ENCODE measurements at regions of chr2 and their contacts with region 1.

Region 1: DNA sequence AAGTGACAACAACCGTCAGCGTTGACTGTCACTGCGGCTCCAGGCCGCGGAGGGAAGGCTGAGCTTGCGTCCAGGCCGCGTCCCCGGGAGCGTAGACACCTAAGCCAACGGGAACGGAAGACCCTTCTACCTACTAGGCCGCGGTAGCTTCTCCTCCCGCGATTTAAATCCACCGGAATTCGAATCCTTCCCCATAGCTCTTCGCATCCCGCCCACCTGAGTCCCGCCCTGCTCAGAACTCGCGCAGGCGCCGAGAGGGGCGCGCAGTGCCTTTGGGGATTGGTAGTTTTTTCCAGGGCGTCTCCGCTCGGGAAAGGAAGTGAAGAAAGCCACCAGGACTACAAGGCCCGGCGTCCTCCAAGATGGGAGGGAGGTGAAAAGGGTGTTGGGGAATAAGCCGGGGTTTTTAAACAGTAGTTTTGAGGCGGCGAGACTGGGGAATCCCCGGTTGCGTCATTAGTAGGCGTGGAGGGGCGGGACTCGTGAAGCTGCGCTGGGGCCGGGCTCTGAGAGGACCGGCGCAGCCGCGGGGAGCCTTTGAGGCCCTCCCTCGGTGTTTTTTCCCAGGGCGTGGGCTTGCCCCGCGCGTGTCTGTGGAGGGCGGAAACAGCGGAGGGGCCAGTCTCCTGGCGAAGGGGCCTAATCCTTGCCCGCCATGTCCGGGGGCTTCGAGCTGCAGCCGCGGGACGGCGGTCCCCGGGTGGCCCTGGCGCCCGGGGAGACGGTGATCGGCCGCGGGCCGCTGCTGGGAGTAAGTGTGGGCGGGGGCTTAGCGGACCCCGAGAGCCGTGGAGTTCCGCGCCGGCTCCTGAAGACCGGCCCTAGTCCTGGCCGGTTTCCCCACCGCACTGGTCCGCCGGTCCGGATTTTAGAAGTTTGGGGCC is at the starts of genes APLF and FBXO48:
- DNase-seq: peak; percentile 98
- ATAC-seq: peak; percentile 98
- H3K4me3 ChIP-seq: peak within 1 kb of the TSS; percentile 82 to 85
- H3K27ac ChIP-seq: peak within 1 kb of the TSS; percentile 48; the same call in 1 of the 2 replicates
- H3K4me1 ChIP-seq: peaks cover 4 to 18% of the 10 kb centered on the region in 2 experiments; a peak in 3 of 4 replicates
- H3K27me3 ChIP-seq: no peaks in the 10 kb centered on the region
- CTCF ChIP-seq: no peak
- POLR2A ChIP-seq: peak; percentile 59
- RAD21 ChIP-seq: no peak
- total RNA-seq, gene APLF: 1.6 TPM
- total RNA-seq, gene FBXO48: 0.91 TPM

Region 2: GRCh38 chr2:68441179-68441993 is 25.9 kb before region 1 on chr2:
- CTCF ChIA-PET with region 1: interaction called, 10 read pairs
- POLR2A ChIA-PET with region 1: no interaction called
- RAD21 ChIA-PET with region 1: no interaction called
- intact Hi-C with region 1: no loop called
- DNase-seq: peak; percentile 82
- ATAC-seq: peak; percentile 98
- H3K4me3 ChIP-seq: no peak overlapping the region
- H3K27ac ChIP-seq: no peak overlapping the region
- H3K4me1 ChIP-seq: peaks cover 0 to 4% of the 10 kb centered on the region in 2 experiments; a peak in 1 of 4 replicates
- H3K27me3 ChIP-seq: no peaks in the 10 kb centered on the region
- CTCF ChIP-seq: peak; percentile 82 to 95 (median 84)
- POLR2A ChIP-seq: no peak
- RAD21 ChIP-seq: peak; percentile 83

Region 3: GRCh38 chr2:68709421-68709911 is 242.1 kb after region 1 on chr2:
- CTCF ChIA-PET with region 1: interaction called, 32 read pairs
- POLR2A ChIA-PET with region 1: no interaction called
- RAD21 ChIA-PET with region 1: no interaction called
- intact Hi-C with region 1: loop called (anchors 2 kb)
- DNase-seq: peak; percentile 45
- ATAC-seq: peak; percentile 98
- H3K4me3 ChIP-seq: no peak overlapping the region
- H3K27ac ChIP-seq: no peak overlapping the region
- H3K4me1 ChIP-seq: no peaks in the 10 kb centered on the region
- H3K27me3 ChIP-seq: no peaks in the 10 kb centered on the region
- CTCF ChIP-seq: peak; percentile 63 to 78 (median 77)
- POLR2A ChIP-seq: no peak
- RAD21 ChIP-seq: peak; percentile 77

Region 4: GRCh38 chr2:68751397-68752339 is 284.3 kb after region 1 on chr2:
- CTCF ChIA-PET with region 1: interaction called, 13 read pairs
- POLR2A ChIA-PET with region 1: no interaction called
- RAD21 ChIA-PET with region 1: no interaction called
- intact Hi-C with region 1: no loop called
- DNase-seq: peak; percentile 86
- ATAC-seq: peak; percentile 99
- H3K4me3 ChIP-seq: no peak overlapping the region
- H3K27ac ChIP-seq: no peak overlapping the region
- H3K4me1 ChIP-seq: no peaks in the 10 kb centered on the region
- H3K27me3 ChIP-seq: no peaks in the 10 kb centered on the region
- CTCF ChIP-seq: peak; percentile 90 to 93 (median 90)
- POLR2A ChIP-seq: no peak
- RAD21 ChIP-seq: peak; percentile 82

Region 5: DNA sequence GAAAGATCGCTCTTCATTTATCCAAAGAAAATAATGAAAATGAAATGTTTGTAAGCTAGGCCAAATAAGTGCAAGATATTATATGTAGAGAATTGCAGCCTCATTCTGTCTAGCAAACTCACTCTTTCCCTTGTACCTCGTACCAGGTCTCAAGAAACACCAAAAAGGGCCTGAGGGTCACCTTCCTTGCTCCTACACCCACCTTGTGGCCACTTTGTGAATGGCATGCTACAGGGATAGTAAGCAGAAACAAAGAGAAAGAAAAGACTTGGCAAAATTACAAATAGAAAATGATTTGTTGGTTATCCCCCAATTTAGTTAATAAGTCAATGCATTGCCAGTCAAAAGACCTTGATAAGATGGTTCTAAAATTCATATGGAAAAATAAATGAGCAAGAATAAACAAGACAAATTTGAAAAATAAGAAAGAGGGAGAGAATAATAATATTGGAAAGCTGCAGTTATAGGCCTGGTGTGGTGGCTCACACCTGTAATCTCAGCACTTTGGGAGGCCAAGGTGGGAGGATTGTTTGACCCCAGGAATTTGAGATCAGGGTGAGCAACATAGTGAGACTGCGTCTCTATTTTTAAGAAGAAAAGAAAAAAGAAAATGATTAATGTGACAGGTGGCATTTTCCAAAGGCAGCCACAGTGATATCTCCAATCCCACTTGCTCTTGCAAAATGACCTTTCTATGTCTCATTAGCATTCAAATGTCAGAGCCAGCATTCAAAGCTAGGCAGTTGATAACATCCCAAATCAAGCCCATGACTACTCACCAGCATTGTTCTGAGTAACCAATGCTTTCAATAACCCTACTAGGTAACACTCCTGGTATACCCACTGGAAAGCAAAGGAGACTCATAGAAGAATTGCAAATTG is 442.7 kb after region 1 on chr2:
- CTCF ChIA-PET with region 1: interaction called, 21 read pairs
- POLR2A ChIA-PET with region 1: interaction called, 3 read pairs
- RAD21 ChIA-PET with region 1: interaction called in 1 of 2 experiments, 3 read pairs
- intact Hi-C with region 1: loop called (anchors 5 kb)
- DNase-seq: peak; percentile 73
- ATAC-seq: peak; percentile 57
- H3K4me3 ChIP-seq: no peak overlapping the region
- H3K27ac ChIP-seq: no peak overlapping the region
- H3K4me1 ChIP-seq: peaks cover 20 to 23% of the 10 kb centered on the region in 2 experiments
- H3K27me3 ChIP-seq: no peaks in the 10 kb centered on the region
- CTCF ChIP-seq: peak; percentile 82 to 87 (median 83)
- POLR2A ChIP-seq: no peak
- RAD21 ChIP-seq: peak; percentile 85

Region 6: GRCh38 chr2:69012310-69013141 is 545.2 kb after region 1 on chr2:
- CTCF ChIA-PET with region 1: interaction called, 4 read pairs
- POLR2A ChIA-PET with region 1: no interaction called
- RAD21 ChIA-PET with region 1: no interaction called
- intact Hi-C with region 1: loop called (anchors 1 kb)
- DNase-seq: peak; percentile 23
- ATAC-seq: peak; percentile 72
- H3K4me3 ChIP-seq: peak overlapping the region; percentile 79 to 88
- H3K27ac ChIP-seq: peak overlapping the region; percentile 51
- H3K4me1 ChIP-seq: peaks cover 10 to 16% of the 10 kb centered on the region in 2 experiments
- H3K27me3 ChIP-seq: no peaks in the 10 kb centered on the region
- CTCF ChIP-seq: peak; percentile 74 to 91 (median 78)
- POLR2A ChIP-seq: no peak
- RAD21 ChIP-seq: peak; percentile 79

Measured in HCT116 (cell line).